Aorta (tissue), 5 donors: ENCODE measurements at regions of chr19 and their contacts with region 1.

Region 1: GRCh38 chr19:56314562-56315077 is at the start of gene ZSCAN5A:
- DNase-seq: peak; percentile 99
- ATAC-seq: peak; percentile 96
- H3K4me3 ChIP-seq: peak within 1 kb of the TSS; percentile 64 to 67
- H3K27ac ChIP-seq: peak within 1 kb of the TSS in 1 of 2 donors; percentile 98
- H3K4me1 ChIP-seq: no peaks in the 10 kb centered on the region
- H3K27me3 ChIP-seq: no peaks in the 10 kb centered on the region
- total RNA-seq, gene ZSCAN5A: 10.2 to 13.8 TPM

Region 2: DNA sequence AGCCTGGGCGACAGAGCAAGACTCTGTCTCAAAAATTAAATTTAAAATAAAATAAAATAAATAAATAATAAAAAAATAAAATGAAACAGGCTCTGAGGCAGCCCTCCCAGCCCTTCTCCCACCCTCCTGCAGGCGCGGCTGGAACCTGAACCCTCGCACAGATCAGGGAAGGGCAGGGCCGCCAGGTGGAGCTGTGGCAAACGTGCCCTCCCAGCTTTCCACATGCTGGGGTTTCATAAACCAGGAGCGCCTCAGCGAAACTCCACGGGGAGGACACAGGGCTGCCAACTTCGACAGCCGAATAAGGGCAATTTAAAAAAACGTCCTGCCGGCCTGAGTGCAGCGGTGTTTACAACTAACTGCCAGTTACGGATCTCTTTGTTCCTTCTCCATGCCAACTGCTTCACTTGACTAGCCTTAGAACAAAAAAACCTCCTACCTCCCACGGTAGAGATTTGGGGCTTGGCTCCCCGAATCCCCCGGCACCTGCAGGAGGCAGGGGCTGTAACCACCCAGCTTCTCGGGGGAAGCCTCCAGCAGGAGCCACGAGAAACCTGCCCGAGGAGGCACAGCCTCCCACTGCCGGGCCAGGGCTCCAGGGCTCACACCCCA is 209.4 kb before region 1 on chr19:
- intact Hi-C with region 1: loop called in 1 of 2 experiments (anchors 10 kb)
- DNase-seq: peak; percentile 80 to 91
- ATAC-seq: peak; percentile 87
- H3K4me3 ChIP-seq: no peak overlapping the region
- H3K27ac ChIP-seq: peak overlapping the region in 1 of 2 donors; percentile 28
- H3K4me1 ChIP-seq: no peaks in the 10 kb centered on the region
- H3K27me3 ChIP-seq: no peaks in the 10 kb centered on the region

Region 3: DNA sequence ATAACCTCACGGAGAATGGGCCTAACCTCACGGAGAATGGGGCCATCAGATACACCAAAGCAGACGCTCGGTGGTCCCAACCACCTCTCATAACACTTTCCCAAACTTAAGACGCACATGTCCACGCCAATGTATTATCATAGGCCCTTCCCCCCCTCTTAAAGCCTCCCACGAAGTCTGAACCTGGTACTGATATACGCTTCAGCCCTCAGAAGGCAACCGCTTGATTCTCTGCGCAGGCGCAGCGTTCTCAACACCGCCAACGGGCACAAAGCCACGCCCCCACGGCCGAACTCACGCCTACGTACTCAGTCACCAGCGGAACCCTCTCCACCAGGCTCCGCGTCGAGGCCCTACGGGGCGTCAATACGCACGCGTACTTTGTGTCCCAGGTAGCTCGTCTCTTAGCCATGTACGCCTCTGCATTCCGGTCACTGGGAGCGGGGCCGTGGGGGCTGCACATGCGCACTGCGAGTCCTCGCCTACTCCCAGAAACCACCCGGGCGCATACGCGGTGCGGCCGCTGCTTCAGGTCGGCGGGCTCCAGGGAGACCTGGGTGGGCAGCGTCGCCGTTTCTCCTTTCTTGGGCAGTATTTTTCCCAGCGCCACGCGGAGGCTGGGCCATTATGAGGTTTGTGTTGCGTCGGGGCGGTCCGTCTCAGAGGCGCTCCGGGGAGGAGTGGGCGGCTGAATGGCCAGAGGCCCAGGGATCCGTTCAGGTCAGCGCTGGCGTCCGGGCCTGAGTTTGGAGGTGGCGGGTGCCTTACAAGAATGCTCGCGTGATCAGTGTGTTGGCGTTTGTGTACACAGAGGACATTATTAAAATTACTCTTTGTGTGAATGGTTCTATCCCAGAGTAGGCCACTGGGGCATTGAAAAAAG is 53.5 kb after region 1 on chr19:
- intact Hi-C with region 1: loop called in 1 of 2 experiments (anchors 5 kb)
- DNase-seq: peak; percentile 95 to 98
- ATAC-seq: peak; percentile 97
- H3K4me3 ChIP-seq: peak overlapping the region; percentile 0 to 41
- H3K27ac ChIP-seq: peak overlapping the region; percentile 2 to 8
- H3K4me1 ChIP-seq: peaks cover 0 to 7% of the 10 kb centered on the region in 2 donors
- H3K27me3 ChIP-seq: no peaks in the 10 kb centered on the region